H1 (cell line): ENCODE measurements at regions of chr3 and their contacts with region 1.

Region 1: DNA sequence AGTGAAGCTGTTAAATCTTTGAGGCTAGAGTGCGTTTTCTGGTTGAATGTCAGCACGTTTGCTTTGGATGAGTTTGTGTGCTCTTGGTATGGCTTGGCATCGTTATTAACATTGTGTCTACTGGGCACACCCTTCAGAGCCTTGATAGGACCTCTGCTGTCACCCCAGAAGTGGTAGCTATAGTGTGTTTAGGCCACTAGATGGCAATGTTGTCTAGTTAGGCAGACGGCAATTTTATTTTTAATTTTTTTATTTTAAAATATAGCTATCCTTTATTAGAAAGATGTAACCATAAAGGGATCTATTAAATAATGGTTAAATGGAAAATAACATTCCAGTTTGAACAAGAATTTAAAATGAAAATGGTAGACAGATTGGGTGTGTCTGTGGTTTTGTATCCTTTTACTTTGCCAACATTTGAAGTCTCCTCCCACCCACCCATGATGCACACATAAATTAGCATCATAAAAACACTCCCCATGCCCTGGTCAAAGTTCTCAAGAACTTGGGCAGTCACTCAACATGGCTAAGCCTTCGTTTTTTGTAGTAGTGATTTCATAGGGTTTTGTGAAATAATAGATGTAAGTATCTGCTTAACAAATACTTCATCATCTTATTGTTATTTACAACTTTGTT is 200.7 kb downstream of the KCNH8 start:
- DNase-seq: no peak
- H3K4me3 ChIP-seq: no peak overlapping the region
- H3K27ac ChIP-seq: no peak overlapping the region
- H3K4me1 ChIP-seq: peaks cover 0 to 6% (median 0%) of the 10 kb centered on the region in 4 experiments; a peak in 1 of 7 replicates
- H3K27me3 ChIP-seq: no peaks in the 10 kb centered on the region
- CTCF ChIP-seq: peak in 2 of 3 experiments; percentile 60 to 63; a peak in 3 of 4 replicates
- EP300 ChIP-seq: no peak
- POLR2A ChIP-seq: no peak
- RAD21 ChIP-seq: peak; percentile 81 to 82

Region 2: GRCh38 chr3:19334120-19334519 is 14.9 kb before region 1 on chr3:
- CTCF ChIA-PET with region 1: interaction called, 10 read pairs
- POLR2A ChIA-PET with region 1: interaction called, 3 read pairs
- DNase-seq: no peak
- H3K4me3 ChIP-seq: no peak overlapping the region
- H3K27ac ChIP-seq: no peak overlapping the region
- H3K4me1 ChIP-seq: peaks cover 0 to 4% (median 3%) of the 10 kb centered on the region in 4 experiments; a peak in 3 of 7 replicates
- H3K27me3 ChIP-seq: no peaks in the 10 kb centered on the region
- CTCF ChIP-seq: no peak
- EP300 ChIP-seq: no peak
- POLR2A ChIP-seq: no peak
- RAD21 ChIP-seq: no peak

Region 3: GRCh38 chr3:19866751-19867347 is 517.8 kb after region 1 on chr3:
- CTCF ChIA-PET with region 1: interaction called, 40 read pairs
- POLR2A ChIA-PET with region 1: no interaction called
- DNase-seq: peak; percentile 41 to 79
- H3K4me3 ChIP-seq: no peak overlapping the region
- H3K27ac ChIP-seq: no peak overlapping the region
- H3K4me1 ChIP-seq: no peaks in the 10 kb centered on the region
- H3K27me3 ChIP-seq: no peaks in the 10 kb centered on the region
- CTCF ChIP-seq: peak in 2 of 3 experiments; percentile 71 to 81; a peak in 3 of 4 replicates
- EP300 ChIP-seq: no peak
- POLR2A ChIP-seq: no peak
- RAD21 ChIP-seq: peak; percentile 97